ENCODE measurements at regions of chr13 and their contacts with region 1.

Region 1: GRCh38 chr13:79988573-79988972 is 352.4 kb downstream of the SPRY2 start:
- DNase-seq: no peak
- H3K4me3 ChIP-seq: no peak overlapping the region
- H3K27ac ChIP-seq: no peak overlapping the region
- H3K4me1 ChIP-seq: no peaks in the 10 kb centered on the region
- H3K27me3 ChIP-seq: no peaks in the 10 kb centered on the region
- CTCF ChIP-seq: no peak
- EP300 ChIP-seq: no peak
- POLR2A ChIP-seq: no peak
- RAD21 ChIP-seq: no peak

Region 2: GRCh38 chr13:79973533-79973963 is 15.0 kb before region 1 on chr13:
- CTCF ChIA-PET with region 1: interaction called, 14 read pairs
- POLR2A ChIA-PET with region 1: interaction called, 3 read pairs
- DNase-seq: no peak
- H3K4me3 ChIP-seq: no peak overlapping the region
- H3K27ac ChIP-seq: no peak overlapping the region
- H3K4me1 ChIP-seq: no peaks in the 10 kb centered on the region
- H3K27me3 ChIP-seq: no peaks in the 10 kb centered on the region
- CTCF ChIP-seq: peak in 2 of 3 experiments; percentile 39 to 57; a peak in 2 of 4 replicates
- EP300 ChIP-seq: no peak
- POLR2A ChIP-seq: no peak
- RAD21 ChIP-seq: peak; percentile 46 to 53

Region 3: DNA sequence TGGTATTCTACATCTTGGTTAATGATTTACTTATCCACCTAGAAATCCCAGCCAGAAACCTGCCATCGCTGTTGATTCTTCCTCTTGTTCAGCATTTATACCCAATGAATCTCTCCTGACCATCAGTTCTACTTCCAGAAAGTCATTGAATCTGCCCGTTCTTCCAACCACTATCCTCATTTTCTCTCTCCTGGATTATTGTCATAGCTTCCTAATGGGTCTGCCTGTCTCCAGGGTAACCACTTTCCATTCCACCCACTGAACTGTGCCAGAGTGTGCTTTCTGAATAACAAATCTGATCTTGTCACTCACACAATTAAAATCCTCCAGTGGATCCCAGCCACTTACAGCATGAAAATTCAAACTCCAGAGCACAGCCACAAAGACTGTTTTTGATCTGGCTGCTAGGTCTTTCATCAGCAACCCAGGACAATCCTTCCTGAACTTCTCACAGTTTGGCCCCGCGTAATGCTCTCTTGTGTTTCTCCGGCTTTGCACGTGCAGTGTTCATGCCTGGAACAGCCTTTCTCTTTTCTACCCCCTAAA is 21.8 kb after region 1 on chr13:
- CTCF ChIA-PET with region 1: no interaction called
- POLR2A ChIA-PET with region 1: no interaction called
- DNase-seq: no peak
- H3K4me3 ChIP-seq: no peak overlapping the region
- H3K27ac ChIP-seq: no peak overlapping the region
- H3K4me1 ChIP-seq: no peaks in the 10 kb centered on the region
- H3K27me3 ChIP-seq: no peaks in the 10 kb centered on the region
- CTCF ChIP-seq: no peak
- EP300 ChIP-seq: no peak
- POLR2A ChIP-seq: no peak
- RAD21 ChIP-seq: no peak

Region 4: GRCh38 chr13:80037505-80037888 is 48.9 kb after region 1 on chr13:
- CTCF ChIA-PET with region 1: no interaction called
- POLR2A ChIA-PET with region 1: no interaction called
- DNase-seq: no peak
- H3K4me3 ChIP-seq: no peak overlapping the region
- H3K27ac ChIP-seq: no peak overlapping the region
- H3K4me1 ChIP-seq: no peaks in the 10 kb centered on the region
- H3K27me3 ChIP-seq: no peaks in the 10 kb centered on the region
- CTCF ChIP-seq: no peak
- EP300 ChIP-seq: no peak
- POLR2A ChIP-seq: no peak
- RAD21 ChIP-seq: no peak